A673 (cell line): ENCODE measurements at regions of chr13 and their contacts with region 1.

Region 1: GRCh38 chr13:22812794-22813193 is 368.0 kb upstream of the SGCG start:
- DNase-seq: no peak
- H3K4me3 ChIP-seq: no peak overlapping the region
- H3K27ac ChIP-seq: no peak overlapping the region
- H3K4me1 ChIP-seq: peaks cover 10% of the 10 kb centered on the region
- H3K27me3 ChIP-seq: no peaks in the 10 kb centered on the region
- CTCF ChIP-seq: no peak

Region 2: GRCh38 chr13:23289917-23290357 is 477.1 kb after region 1 on chr13:
- CTCF ChIA-PET with region 1: no interaction called
- POLR2A ChIA-PET with region 1: interaction called, 10 read pairs
- intact Hi-C with region 1: no loop called
- DNase-seq: peak; percentile 27
- H3K4me3 ChIP-seq: no peak overlapping the region
- H3K27ac ChIP-seq: no peak overlapping the region
- H3K4me1 ChIP-seq: no peaks in the 10 kb centered on the region
- H3K27me3 ChIP-seq: no peaks in the 10 kb centered on the region
- CTCF ChIP-seq: no peak